Natural killer cell (primary cell): ENCODE measurements at regions of chr19 and their contacts with region 1.

Region 1: GRCh38 chr19:43446746-43447489 is 18.5 kb downstream of the LYPD3 start:
- DNase-seq: peak; percentile 72 to 92
- ATAC-seq: peak; percentile 82 to 97 (median 96)
- H3K4me3 ChIP-seq: no peak overlapping the region
- H3K4me3 Mint-ChIP-seq: no peak overlapping the region
- H3K27ac ChIP-seq: no peak overlapping the region
- H3K27ac Mint-ChIP-seq: peak overlapping the region; percentile 70 to 75
- H3K4me1 ChIP-seq: peaks cover 3% of the 10 kb centered on the region
- H3K4me1 Mint-ChIP-seq: peaks cover 8 to 11% of the 10 kb centered on the region in 2 donors
- H3K27me3 ChIP-seq: no peaks in the 10 kb centered on the region
- H3K27me3 Mint-ChIP-seq: no peaks in the 10 kb centered on the region
- CTCF ChIP-seq: peak; percentile 96

Region 2: GRCh38 chr19:43425567-43426392 is 21.1 kb before region 1 on chr19:
- intact Hi-C with region 1: no loop called
- DNase-seq: peak in 1 of 2 donors; percentile 25
- ATAC-seq: peak in 1 of 3 donors; percentile 38
- H3K4me3 ChIP-seq: no peak overlapping the region
- H3K4me3 Mint-ChIP-seq: no peak overlapping the region
- H3K27ac ChIP-seq: no peak overlapping the region
- H3K27ac Mint-ChIP-seq: no peak overlapping the region
- H3K4me1 ChIP-seq: no peaks in the 10 kb centered on the region
- H3K4me1 Mint-ChIP-seq: peaks cover 0 to 10% of the 10 kb centered on the region in 2 donors
- H3K27me3 ChIP-seq: no peaks in the 10 kb centered on the region
- H3K27me3 Mint-ChIP-seq: peaks cover 0 to 3% of the 10 kb centered on the region in 2 donors
- CTCF ChIP-seq: peak; percentile 23

Region 3: GRCh38 chr19:43519436-43520088 is 72.6 kb after region 1 on chr19:
- intact Hi-C with region 1: loop called (anchors 1 kb)
- DNase-seq: peak; percentile 70 to 93
- ATAC-seq: peak; percentile 69 to 84 (median 76)
- H3K4me3 ChIP-seq: no peak overlapping the region
- H3K4me3 Mint-ChIP-seq: no peak overlapping the region
- H3K27ac ChIP-seq: no peak overlapping the region
- H3K27ac Mint-ChIP-seq: peak overlapping the region in 1 of 2 donors; percentile 13
- H3K4me1 ChIP-seq: peaks cover 2% of the 10 kb centered on the region
- H3K4me1 Mint-ChIP-seq: peaks cover 9% of the 10 kb centered on the region in 2 donors
- H3K27me3 ChIP-seq: no peaks in the 10 kb centered on the region
- H3K27me3 Mint-ChIP-seq: no peaks in the 10 kb centered on the region
- CTCF ChIP-seq: peak; percentile 88

Region 4: GRCh38 chr19:43651758-43652545 is 205.0 kb after region 1 on chr19:
- intact Hi-C with region 1: loop called (anchors 1 kb)
- DNase-seq: peak; percentile 25 to 71
- ATAC-seq: peak in 2 of 3 donors; percentile 65 to 70
- H3K4me3 ChIP-seq: no peak overlapping the region
- H3K4me3 Mint-ChIP-seq: no peak overlapping the region
- H3K27ac ChIP-seq: no peak overlapping the region
- H3K27ac Mint-ChIP-seq: no peak overlapping the region
- H3K4me1 ChIP-seq: no peaks in the 10 kb centered on the region
- H3K4me1 Mint-ChIP-seq: no peaks in the 10 kb centered on the region
- H3K27me3 ChIP-seq: no peaks in the 10 kb centered on the region
- H3K27me3 Mint-ChIP-seq: no peaks in the 10 kb centered on the region
- CTCF ChIP-seq: peak; percentile 36

Region 5: GRCh38 chr19:43784981-43785808 is 338.3 kb after region 1 on chr19:
- intact Hi-C with region 1: loop called (anchors 1 kb)
- DNase-seq: peak in 1 of 2 donors; percentile 85
- ATAC-seq: peak; percentile 78 to 90 (median 85)
- H3K4me3 ChIP-seq: no peak overlapping the region
- H3K4me3 Mint-ChIP-seq: no peak overlapping the region
- H3K27ac ChIP-seq: peak overlapping the region; percentile 49
- H3K27ac Mint-ChIP-seq: no peak overlapping the region
- H3K4me1 ChIP-seq: peaks cover 20% of the 10 kb centered on the region
- H3K4me1 Mint-ChIP-seq: peaks cover 0 to 6% of the 10 kb centered on the region in 2 donors
- H3K27me3 ChIP-seq: no peaks in the 10 kb centered on the region
- H3K27me3 Mint-ChIP-seq: peaks cover 23 to 35% of the 10 kb centered on the region in 2 donors
- CTCF ChIP-seq: peak; percentile 92